Activated CD4-positive, alpha-beta T cell treated with anti-CD3 and anti-CD28 coated beads, Interleukin-2, amount 10 ng/mL, durations not matched to agents 24 days and 14 days (primary cell): ENCODE measurements at regions of chr7 and their contacts with region 1.

Region 1: DNA sequence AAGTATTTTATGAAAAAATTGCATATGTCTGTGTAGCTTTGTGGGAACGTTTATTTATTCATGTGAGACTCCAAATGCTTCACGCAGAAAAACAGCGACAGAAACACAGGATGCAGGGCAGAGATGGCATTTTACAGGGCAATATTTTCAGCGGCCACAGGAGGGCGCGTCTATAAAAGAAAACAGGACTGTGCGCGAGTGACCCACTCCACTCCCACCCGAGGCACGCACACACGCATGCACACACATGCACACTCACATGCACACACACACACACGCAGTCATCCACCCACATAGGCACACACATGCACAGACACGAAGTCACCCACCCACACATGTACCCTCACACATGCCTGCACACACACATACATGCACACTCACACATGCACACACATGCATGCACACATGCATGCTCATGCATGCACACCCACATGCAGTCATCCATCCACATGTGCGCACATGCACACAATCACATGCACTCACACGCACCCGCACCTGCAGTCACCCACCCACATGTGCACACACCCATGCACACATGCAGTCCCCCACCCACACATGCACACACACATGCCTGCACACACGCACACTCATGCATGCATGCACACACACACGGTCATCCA is 96.3 kb downstream of the DNAJB6 start:
- DNase-seq: peak; percentile 89
- H3K4me3 Mint-ChIP-seq: peak overlapping the region; percentile 75
- H3K27ac Mint-ChIP-seq: peak overlapping the region; percentile 12
- H3K4me1 Mint-ChIP-seq: peaks cover 17% of the 10 kb centered on the region
- H3K27me3 Mint-ChIP-seq: peaks cover 3% of the 10 kb centered on the region

Region 2: DNA sequence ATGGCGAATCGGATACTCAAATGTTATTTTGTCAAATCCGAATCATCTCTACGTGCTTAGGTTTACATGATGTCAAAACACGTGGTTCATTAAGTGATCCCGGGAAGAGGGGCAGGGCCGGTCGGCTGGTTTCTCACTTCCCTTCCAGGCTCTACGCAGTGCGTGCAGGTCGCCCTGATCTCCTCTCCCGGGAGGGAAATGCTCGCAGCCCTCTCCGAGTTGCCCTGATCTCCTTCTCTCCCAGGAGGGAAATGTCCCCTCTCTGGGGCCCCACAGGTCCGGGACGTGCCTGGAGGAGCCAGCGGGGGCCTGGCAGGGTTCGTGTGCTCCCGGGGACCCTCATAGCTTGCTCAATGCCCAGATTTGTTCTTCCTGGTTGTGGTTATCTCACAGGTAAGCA is 106.5 kb after region 1 on chr7:
- intact Hi-C with region 1: loop called (anchors 5 kb)
- DNase-seq: no peak
- H3K4me3 Mint-ChIP-seq: no peak overlapping the region
- H3K27ac Mint-ChIP-seq: no peak overlapping the region
- H3K4me1 Mint-ChIP-seq: peaks cover 4% of the 10 kb centered on the region
- H3K27me3 Mint-ChIP-seq: peaks cover 7% of the 10 kb centered on the region

Region 3: GRCh38 chr7:157612664-157613561 is 179.8 kb after region 1 on chr7:
- intact Hi-C with region 1: loop called (anchors 10 kb)
- DNase-seq: peak; percentile 89
- H3K4me3 Mint-ChIP-seq: peak overlapping the region; percentile 78
- H3K27ac Mint-ChIP-seq: peak overlapping the region; percentile 42
- H3K4me1 Mint-ChIP-seq: peaks cover 5% of the 10 kb centered on the region
- H3K27me3 Mint-ChIP-seq: peaks cover 2% of the 10 kb centered on the region

Region 4: DNA sequence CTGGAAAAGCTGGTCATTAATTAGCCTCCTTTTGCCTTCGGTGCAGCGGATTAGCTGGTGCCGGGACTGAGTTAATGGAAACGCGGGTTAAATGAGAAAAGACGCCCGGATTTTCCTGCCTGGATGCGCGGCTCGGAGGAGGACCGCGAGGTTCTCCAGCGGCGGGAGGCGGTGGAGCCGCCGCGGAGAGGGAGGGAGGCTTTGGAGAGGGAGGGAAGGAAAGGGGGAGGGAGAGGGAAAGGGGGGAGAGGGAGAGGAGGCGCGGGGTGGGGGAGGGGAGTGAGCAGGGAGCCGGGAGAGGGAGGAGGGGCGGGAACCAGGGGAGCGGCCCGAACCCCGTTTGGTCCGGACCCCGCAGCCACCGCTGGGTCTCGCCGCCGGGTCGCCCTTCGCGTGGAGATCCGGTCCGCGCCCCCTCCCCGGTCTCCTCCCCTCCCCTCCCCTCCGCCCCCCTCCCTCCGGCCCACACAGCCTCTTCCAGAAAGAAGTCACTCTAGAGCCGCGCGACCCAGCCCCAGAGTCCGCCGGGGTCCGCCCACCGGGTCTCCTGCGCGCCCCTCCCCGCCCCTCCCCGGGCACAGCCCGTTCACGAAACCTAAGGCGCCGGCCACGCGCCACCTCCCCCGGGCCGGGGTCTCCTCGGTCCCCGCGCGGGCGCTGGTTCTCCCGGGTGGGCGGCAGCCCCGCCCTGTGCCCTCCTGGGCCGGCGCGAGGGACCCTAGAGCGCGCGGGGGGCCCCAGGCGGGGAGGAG is 251.3 kb after region 1 on chr7:
- intact Hi-C with region 1: loop called (anchors 10 kb)
- DNase-seq: no peak
- H3K4me3 Mint-ChIP-seq: no peak overlapping the region
- H3K27ac Mint-ChIP-seq: no peak overlapping the region
- H3K4me1 Mint-ChIP-seq: peaks cover 5% of the 10 kb centered on the region
- H3K27me3 Mint-ChIP-seq: peaks cover 74% of the 10 kb centered on the region